ENCODE measurements at regions of chr17 and their contacts with region 1.

Region 1: GRCh38 chr17:2414446-2415064 is 13.7 kb upstream of the MNT start:
- DNase-seq: no peak

Region 2: DNA sequence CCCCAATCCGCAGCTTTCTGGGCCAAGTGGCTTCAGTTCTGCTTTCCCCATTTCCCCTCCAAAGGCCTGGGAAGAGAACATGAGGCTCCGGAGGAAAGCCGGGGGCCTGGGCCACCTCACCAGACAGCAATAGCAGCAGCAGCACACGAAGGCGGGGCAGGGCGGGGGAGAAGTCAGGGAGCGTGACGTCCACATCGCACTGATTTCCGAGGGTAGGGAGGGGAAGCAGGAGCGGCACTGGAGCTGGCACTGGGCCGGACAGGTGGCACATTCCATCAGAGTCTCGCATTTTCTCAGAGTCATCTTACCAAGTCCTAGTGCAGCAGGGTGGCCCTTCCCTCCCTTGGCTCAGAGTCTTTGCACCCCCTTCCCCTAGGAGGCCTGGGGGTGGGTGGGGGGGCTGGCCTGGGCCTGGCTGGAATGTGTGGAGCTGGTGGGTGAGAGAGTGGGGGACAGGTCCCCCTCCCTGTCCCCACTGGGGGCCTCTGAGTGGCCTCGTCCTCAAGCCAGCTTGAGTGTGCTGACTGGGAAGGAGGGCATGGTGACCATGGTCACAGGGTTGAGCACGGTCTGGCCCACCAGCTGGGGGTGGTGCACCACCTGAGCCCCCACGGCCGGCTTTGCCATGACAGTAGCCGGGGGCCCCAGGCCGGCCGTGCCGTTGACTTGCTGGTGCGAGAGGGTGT is 28.0 kb before region 1 on chr17:
- intact Hi-C with region 1: loop called (anchors 1 kb)
- DNase-seq: no peak

Measured in cardiac septum (tissue), 1 donor.